GM13976 (cell line): ENCODE measurements at regions of chrX and their contacts with region 1.

Region 1: DNA sequence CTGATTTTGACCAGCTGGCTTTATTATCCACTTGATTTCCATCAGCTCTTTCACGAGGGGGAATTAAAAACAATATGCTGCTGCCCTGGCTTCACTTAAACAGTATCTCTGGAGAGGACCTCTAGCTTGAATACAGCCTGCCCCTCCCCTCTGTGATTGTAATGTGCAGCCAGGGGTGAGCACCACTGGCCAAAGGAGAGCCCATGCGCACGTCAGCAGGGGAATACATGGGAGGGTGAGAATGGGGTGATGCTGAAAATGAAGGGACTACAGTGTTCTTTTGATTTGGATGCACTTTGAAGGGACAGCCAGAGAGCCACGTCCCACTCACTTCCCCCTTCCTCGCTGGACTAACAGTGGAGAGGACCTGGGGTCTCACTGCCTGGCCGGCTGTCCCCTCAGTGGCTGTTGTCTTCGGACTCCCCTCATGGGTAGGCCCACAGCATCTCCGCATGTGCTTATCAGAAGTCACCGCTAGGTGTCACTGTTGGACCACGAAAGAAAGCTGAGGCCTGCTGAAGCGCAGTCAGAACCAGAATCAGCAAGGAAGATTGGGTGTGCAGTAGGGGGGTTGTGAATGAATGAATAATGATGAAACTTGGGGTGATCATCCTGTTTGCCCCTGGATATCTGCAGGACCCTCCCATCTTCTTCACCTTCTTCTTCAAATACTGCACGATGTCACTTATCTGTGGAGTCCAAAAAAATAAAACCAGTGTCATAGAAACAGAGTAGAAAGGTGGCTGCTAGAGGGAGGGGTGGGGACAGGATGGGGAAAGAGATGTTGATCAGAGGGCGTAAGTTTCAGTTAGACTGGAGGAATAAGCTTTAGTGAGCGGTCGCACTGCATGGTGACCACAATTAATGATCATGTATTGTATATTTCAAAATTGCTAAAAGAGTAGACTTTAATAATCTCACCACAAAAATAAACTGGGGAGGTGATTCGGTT is 32.8 kb downstream of the CLCN4 start:
- DNase-seq: peak; percentile 63
- CTCF ChIP-seq: peak; percentile 90

Region 2: DNA sequence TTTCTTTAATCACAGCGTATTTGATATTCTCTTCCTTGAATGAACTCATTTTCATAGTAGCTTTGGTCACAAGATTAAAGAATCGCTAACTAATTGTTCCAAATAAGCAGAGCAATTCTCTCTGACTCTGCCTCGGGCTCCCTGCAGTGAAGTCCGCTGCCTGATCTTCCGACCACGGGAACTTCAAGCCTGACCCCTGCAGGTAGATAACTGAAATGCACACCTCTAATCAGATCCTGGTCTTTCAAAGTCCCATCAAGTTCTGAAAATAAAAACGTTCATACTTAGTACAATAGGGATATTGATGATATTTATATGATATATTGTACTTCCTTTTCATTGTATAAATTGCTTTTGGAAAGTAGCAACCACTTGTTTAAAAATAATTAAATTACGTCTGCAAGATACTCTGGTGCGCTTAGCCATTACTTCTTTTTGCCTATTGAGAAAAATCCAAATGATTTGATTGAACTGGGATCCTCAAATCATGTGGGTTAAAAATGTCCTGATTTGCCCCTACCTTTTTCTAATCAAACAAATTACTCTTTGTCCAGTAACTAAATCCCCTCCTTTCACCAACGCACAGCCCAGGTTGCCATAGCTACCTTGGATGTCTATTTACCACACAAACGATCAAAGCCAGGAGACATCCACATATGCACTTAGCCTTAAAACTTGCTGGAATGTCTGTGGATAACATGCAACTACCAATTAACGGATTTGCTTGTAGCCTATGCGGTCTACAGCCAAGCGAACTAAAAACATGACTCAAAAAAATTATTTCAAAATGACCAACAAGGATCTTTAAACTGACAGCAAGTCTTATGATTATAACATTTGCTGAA is 426.6 kb after region 1 on chrX:
- in situ Hi-C with region 1: loop called (anchors 10 kb)
- DNase-seq: peak; percentile 49
- CTCF ChIP-seq: peak; percentile 49

Region 3: GRCh38 chrX:10725071-10725470 is 535.5 kb after region 1 on chrX:
- in situ Hi-C with region 1: loop called (anchors 25 kb)
- DNase-seq: peak; percentile 30
- CTCF ChIP-seq: no peak

Region 4: GRCh38 chrX:11143931-11144678 is 954.5 kb after region 1 on chrX:
- in situ Hi-C with region 1: loop called (anchors 25 kb)
- DNase-seq: peak; percentile 67
- CTCF ChIP-seq: peak; percentile 26